ENCODE measurements at regions of chr6 and their contacts with region 1.

Region 1: GRCh38 chr6:37516076-37516919 is 16.6 kb upstream of the CCDC167 start:
- DNase-seq: peak; percentile 80 to 99 (median 86)
- ATAC-seq: peak; percentile 83
- H3K4me3 ChIP-seq: peak overlapping the region; percentile 64
- H3K4me3 Mint-ChIP-seq: peak overlapping the region; percentile 83
- H3K27ac ChIP-seq: peak overlapping the region; percentile 93 to 100
- H3K27ac Mint-ChIP-seq: peak overlapping the region; percentile 97
- H3K4me1 ChIP-seq: peaks cover 94% of the 10 kb centered on the region
- H3K4me1 Mint-ChIP-seq: peaks cover 76% of the 10 kb centered on the region
- H3K27me3 ChIP-seq: no peaks in the 10 kb centered on the region
- H3K27me3 Mint-ChIP-seq: no peaks in the 10 kb centered on the region
- CTCF ChIP-seq: no peak

Region 2: DNA sequence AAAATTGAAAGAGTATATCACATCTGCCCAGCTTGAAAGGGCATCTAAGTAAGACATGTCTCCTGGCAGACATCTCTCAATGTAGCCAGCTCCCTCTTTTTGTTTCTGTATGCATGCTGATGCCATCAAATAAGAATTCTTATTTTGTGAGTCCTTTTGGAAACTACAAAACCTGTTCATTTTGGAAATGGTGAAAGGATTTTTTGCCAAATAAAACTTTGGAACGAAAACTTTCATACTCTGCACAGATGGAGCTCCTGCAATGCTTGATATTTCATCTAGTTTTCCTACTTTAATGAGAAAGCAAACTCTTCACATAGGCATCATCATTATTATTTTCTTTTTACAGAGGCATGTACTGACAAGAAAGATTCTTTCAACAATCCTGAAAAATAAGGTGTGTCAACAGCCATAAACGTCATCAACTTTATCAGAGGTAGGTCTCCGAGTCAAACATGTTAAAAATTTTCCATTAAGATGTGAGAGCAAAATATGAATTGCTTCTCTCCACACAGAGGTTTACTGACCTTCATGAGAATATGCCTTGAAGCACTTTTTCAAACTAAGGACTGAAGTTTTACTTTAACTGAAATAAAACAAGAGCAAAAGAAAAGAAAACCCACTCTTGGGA is 109.5 kb before region 1 on chr6:
- CTCF ChIA-PET with region 1: no interaction called
- POLR2A ChIA-PET with region 1: no interaction called
- intact Hi-C with region 1: no loop called
- DNase-seq: no peak
- ATAC-seq: no peak
- H3K4me3 ChIP-seq: no peak overlapping the region
- H3K4me3 Mint-ChIP-seq: no peak overlapping the region
- H3K27ac ChIP-seq: no peak overlapping the region
- H3K27ac Mint-ChIP-seq: no peak overlapping the region
- H3K4me1 ChIP-seq: no peaks in the 10 kb centered on the region
- H3K4me1 Mint-ChIP-seq: no peaks in the 10 kb centered on the region
- H3K27me3 ChIP-seq: no peaks in the 10 kb centered on the region
- H3K27me3 Mint-ChIP-seq: no peaks in the 10 kb centered on the region
- CTCF ChIP-seq: no peak

Region 3: DNA sequence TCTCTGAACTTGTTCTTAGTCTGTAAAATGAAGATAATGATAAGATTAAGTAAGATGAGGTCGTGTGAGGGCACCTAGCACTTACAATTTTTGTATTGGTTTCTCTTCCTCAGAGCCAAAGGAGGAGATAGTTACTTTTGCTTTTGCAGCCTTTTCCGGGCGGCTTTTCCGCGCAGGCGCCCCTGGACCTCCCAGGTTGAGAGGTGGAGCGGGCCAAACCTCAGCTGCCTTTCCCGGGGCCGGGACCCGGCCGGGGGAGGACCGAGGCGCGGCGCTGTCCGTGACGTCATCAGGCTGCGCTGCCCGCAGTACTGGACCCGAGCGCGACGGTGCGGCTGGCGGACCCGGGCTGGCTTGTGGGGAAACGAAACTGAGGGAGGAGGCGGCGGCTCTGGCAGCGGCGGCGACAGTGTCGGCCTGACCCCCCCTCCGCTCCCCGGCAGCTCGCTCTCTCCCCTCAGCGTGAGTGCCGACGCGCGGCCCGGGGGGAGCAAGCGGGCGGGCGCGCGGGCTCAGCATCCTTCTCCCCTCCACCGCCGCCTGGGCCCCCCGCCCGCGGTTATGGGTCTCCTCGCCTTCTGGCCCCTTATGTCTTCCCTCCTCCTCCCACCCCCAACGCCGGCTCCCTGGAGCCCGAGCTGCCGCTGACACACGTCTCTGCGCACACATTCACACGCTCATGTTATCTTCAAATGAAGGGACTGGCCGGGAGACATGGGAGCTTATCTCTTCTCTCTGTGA is 83.2 kb before region 1 on chr6 and contains the start of gene CMTR1:
- CTCF ChIA-PET with region 1: interaction called, 4 read pairs
- POLR2A ChIA-PET with region 1: interaction called, 15 read pairs
- intact Hi-C with region 1: loop called in 1 of 2 experiments (anchors 1 kb)
- DNase-seq: peak; percentile 91 to 99 (median 96)
- ATAC-seq: peak; percentile 89
- H3K4me3 ChIP-seq: peak within 1 kb of the TSS; percentile 98
- H3K4me3 Mint-ChIP-seq: peak within 1 kb of the TSS; percentile 95
- H3K27ac ChIP-seq: peak within 1 kb of the TSS; percentile 91
- H3K27ac Mint-ChIP-seq: peak within 1 kb of the TSS; percentile 95
- H3K4me1 ChIP-seq: peaks cover 29% of the 10 kb centered on the region
- H3K4me1 Mint-ChIP-seq: peaks cover 45% of the 10 kb centered on the region
- H3K27me3 ChIP-seq: no peaks in the 10 kb centered on the region
- H3K27me3 Mint-ChIP-seq: peaks cover 6% of the 10 kb centered on the region
- CTCF ChIP-seq: no peak
- total RNA-seq, gene CMTR1: 79.7 to 80.3 TPM

Region 4: GRCh38 chr6:37489660-37490361 is 26.5 kb before region 1 on chr6:
- CTCF ChIA-PET with region 1: interaction called, 18 read pairs
- POLR2A ChIA-PET with region 1: interaction called, 31 read pairs
- intact Hi-C with region 1: loop called in 1 of 2 experiments (anchors 2 kb)
- DNase-seq: peak in 6 of 14 experiments; percentile 43 to 64 (median 54)
- ATAC-seq: peak; percentile 21
- H3K4me3 ChIP-seq: no peak overlapping the region
- H3K4me3 Mint-ChIP-seq: no peak overlapping the region
- H3K27ac ChIP-seq: peak overlapping the region; percentile 48 to 87
- H3K27ac Mint-ChIP-seq: peak overlapping the region; percentile 77
- H3K4me1 ChIP-seq: peaks cover 78% of the 10 kb centered on the region
- H3K4me1 Mint-ChIP-seq: peaks cover 52% of the 10 kb centered on the region
- H3K27me3 ChIP-seq: no peaks in the 10 kb centered on the region
- H3K27me3 Mint-ChIP-seq: no peaks in the 10 kb centered on the region
- CTCF ChIP-seq: peak; percentile 35

Region 5: GRCh38 chr6:37547564-37548061 is 31.3 kb after region 1 on chr6:
- CTCF ChIA-PET with region 1: interaction called, 5 read pairs
- POLR2A ChIA-PET with region 1: interaction called, 37 read pairs
- intact Hi-C with region 1: no loop called
- DNase-seq: peak in 5 of 14 experiments; percentile 9 to 59 (median 47)
- ATAC-seq: peak; percentile 63
- H3K4me3 ChIP-seq: no peak overlapping the region
- H3K4me3 Mint-ChIP-seq: peak overlapping the region; percentile 3
- H3K27ac ChIP-seq: peak overlapping the region in 1 of 2 donors; percentile 65
- H3K27ac Mint-ChIP-seq: peak overlapping the region; percentile 81
- H3K4me1 ChIP-seq: peaks cover 37% of the 10 kb centered on the region
- H3K4me1 Mint-ChIP-seq: peaks cover 54% of the 10 kb centered on the region
- H3K27me3 ChIP-seq: no peaks in the 10 kb centered on the region
- H3K27me3 Mint-ChIP-seq: no peaks in the 10 kb centered on the region
- CTCF ChIP-seq: no peak

Region 6: DNA sequence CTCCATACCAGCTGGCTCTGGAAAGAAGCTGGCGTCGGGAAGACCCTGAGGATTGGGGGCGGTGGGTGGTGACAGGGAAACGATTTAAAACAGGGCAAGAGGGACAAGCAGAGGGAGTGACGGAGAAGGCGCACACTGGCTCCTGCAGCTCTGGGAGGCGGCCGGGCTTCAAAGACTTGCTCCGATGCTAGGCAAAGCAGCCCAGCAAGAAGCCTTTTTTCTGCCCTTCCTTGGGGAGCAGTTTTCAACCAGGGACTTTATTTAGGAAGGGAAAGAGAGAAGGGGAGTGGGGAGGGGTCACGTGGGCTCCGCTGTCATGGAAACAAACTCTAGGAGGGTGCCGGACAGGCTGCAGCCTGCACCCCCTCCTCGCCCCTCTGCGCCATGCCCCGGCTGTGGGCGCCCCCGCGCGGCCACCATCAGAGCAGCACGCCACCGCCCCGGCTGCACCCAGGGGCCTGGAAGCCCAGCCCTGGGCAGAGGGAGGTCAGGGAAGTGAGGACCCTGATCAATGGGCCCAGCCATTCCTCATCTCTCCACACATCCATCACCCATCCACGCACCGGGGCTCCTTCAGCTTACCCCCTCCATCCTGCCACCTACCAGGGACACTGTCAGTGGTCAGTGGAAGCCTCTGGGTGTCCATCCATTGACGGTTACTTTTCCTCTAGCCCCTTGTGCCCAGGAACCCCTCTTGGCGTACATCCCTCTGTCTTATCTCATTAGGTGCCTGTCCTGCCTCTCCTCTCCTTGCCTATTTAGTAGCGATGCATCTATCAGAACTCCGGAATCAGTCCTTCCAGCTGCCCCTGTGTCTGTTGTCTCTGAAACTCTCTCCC is 50.0 kb after region 1 on chr6:
- CTCF ChIA-PET with region 1: interaction called, 10 read pairs
- POLR2A ChIA-PET with region 1: interaction called, 9 read pairs
- intact Hi-C with region 1: loop called (anchors 5 kb)
- DNase-seq: peak; percentile 41 to 86 (median 70)
- ATAC-seq: peak; percentile 91
- H3K4me3 ChIP-seq: peak overlapping the region; percentile 56
- H3K4me3 Mint-ChIP-seq: peak overlapping the region; percentile 49
- H3K27ac ChIP-seq: no peak overlapping the region
- H3K27ac Mint-ChIP-seq: no peak overlapping the region
- H3K4me1 ChIP-seq: peaks cover 13% of the 10 kb centered on the region
- H3K4me1 Mint-ChIP-seq: peaks cover 12% of the 10 kb centered on the region
- H3K27me3 ChIP-seq: peaks cover 0 to 4% of the 10 kb centered on the region in 2 experiments
- H3K27me3 Mint-ChIP-seq: no peaks in the 10 kb centered on the region
- CTCF ChIP-seq: peak; percentile 93

Measured in CD4-positive, alpha-beta T cell (primary cell).